Activated CD4-positive, alpha-beta T cell treated with anti-CD3 and anti-CD28 coated beads, Interleukin-2, amount 10 ng/mL, durations not matched to agents 7 days and 5 days (primary cell): ENCODE measurements at regions of chr3 and their contacts with region 1.

Region 1: DNA sequence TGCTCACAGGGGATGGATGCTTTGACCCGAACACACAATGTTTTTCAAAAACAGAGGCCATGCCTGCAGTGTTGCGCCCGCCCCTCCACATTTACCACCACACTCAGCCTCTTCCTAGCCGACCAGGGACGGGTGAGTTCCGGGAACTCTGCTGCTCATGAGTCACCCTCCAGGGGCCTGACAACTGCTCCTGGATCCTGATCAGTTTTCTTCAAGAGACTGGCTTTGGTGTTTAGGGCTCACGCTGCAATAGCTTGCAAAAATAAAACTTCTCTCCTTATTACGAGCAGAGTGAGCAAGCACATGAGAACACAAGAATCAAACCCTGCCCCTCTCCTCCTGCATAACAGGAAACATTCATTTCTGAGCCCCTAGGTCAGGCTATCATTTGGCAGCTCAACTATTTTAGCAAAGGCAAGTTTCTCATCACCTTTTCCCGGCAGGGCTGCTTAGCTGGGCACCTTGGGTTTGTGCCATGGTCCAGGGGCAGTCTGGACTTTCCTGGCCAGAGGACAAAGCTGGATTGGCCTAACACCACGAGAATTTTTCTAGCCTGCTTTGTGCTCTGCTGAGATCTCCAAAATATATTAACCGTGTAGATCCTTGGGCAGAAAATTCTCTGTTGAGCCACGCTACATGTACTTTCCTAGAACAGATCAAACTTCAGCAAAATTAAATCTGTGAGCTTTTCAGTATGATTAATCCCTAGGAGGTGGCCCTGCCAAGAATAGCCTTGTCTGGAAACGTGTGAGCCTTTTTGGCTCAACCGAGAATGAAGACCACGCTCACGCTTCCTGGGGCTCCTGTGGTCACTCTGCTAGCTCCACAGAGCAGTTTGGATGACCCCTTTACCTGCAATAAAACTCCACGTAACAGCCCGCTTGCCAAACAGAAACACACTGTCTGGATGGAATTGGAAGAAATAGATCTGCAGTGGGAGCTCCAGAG is 52.7 kb upstream of the SPATA12 start:
- DNase-seq: no peak
- H3K4me3 Mint-ChIP-seq: no peak overlapping the region
- H3K27ac Mint-ChIP-seq: peak overlapping the region; percentile 76
- H3K4me1 Mint-ChIP-seq: peaks cover 9% of the 10 kb centered on the region
- H3K27me3 Mint-ChIP-seq: peaks cover 3% of the 10 kb centered on the region

Region 2: DNA sequence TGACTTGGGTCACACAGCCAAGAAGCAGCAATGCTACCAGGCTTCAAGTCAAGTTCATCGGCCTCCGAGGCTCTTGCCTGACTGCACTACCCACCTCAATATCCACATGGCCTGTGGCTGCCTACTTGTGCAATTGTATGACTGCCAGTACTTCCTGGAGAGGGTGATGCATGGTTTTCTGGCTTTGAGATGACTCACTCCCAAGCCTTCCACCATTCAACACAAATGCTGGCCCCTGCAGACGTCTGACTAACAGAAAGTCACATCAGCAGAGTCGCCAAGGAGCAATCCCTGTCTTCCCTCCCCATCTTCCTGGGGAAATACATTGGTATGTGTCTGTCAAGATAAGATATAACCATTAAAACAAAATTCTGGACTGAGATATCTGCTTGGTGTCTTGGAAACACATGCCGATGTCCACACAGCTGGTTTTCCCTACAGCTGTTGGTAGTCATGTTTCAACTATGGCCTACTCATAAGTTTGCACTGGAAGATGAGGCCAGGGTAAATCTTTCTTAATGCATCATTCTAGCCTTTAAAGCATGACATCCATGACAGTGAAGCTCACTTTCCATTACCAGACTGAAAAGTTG is 26.9 kb before region 1 on chr3:
- CTCF ChIA-PET with region 1: no interaction called
- POLR2A ChIA-PET with region 1: no interaction called
- DNase-seq: peak; percentile 29
- H3K4me3 Mint-ChIP-seq: no peak overlapping the region
- H3K27ac Mint-ChIP-seq: peak overlapping the region; percentile 48
- H3K4me1 Mint-ChIP-seq: peaks cover 25% of the 10 kb centered on the region
- H3K27me3 Mint-ChIP-seq: no peaks in the 10 kb centered on the region

Region 3: DNA sequence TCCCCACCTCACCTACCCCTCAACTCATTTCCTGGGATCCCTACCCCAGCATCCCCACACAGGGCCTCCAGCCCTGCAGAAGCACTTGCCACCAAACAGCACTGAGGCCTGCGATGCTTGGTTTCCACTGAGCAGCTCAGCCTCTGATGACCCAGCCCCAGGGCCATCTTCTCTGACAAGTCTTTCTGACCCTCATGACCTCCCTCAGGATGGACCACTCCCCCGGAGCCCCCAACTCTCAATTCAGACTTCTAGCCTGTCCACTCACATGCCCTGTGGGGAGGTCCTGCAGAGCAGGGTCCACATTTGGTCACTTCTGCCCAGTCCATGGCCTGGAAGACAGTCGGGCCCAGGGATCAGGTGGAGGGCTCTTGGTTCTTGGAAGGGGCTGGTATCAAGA is 10.7 kb before region 1 on chr3:
- CTCF ChIA-PET with region 1: interaction called, 12 read pairs
- POLR2A ChIA-PET with region 1: no interaction called
- DNase-seq: no peak
- H3K4me3 Mint-ChIP-seq: no peak overlapping the region
- H3K27ac Mint-ChIP-seq: no peak overlapping the region
- H3K4me1 Mint-ChIP-seq: peaks cover 3% of the 10 kb centered on the region
- H3K27me3 Mint-ChIP-seq: peaks cover 3% of the 10 kb centered on the region

Region 4: DNA sequence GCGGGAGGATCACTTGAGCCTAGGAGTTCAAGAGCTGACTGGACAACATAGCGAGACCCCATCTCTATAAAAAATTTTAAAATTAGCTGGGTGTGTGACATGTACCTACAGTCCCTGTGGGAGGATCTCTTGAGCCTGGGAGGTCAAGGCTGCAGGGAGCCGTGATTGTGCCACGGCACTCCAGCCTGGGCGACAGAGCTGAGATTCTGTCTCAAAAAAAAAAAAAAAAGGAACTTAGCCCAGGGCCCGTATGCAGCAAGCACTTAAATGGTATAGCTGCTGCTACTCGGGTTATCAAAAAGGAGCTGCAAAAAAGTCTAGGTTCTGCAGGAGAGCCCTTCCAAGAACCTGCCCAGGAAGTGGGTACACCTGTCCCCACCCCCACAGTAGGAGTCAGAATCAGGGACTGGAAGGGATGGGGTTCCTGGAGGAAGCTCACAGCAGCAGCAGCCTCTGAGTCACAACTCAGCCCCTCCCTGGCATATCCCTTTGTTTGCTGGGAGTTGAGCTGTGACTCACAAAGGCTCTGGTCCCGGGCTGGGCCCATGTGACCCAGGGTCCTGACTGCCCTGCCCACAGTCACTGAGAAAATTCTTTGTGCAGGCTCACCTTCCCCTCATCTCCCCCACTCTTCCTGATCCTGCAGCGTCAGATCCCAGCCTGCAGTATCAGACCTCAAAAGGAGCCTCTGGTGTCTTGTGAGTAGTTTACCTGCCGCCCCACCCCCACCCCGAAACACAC is 52.5 kb after region 1 on chr3 and contains the start of gene SPATA12:
- CTCF ChIA-PET with region 1: no interaction called
- POLR2A ChIA-PET with region 1: no interaction called
- DNase-seq: no peak
- H3K4me3 Mint-ChIP-seq: no peak within 1 kb of the TSS
- H3K27ac Mint-ChIP-seq: no peak within 1 kb of the TSS
- H3K4me1 Mint-ChIP-seq: peaks cover 11% of the 10 kb centered on the region
- H3K27me3 Mint-ChIP-seq: no peaks in the 10 kb centered on the region
- total RNA-seq, gene SPATA12: not detected